Heart right ventricle (tissue), 16 donors: ENCODE measurements at regions of chr16 and their contacts with region 1.

Region 1: DNA sequence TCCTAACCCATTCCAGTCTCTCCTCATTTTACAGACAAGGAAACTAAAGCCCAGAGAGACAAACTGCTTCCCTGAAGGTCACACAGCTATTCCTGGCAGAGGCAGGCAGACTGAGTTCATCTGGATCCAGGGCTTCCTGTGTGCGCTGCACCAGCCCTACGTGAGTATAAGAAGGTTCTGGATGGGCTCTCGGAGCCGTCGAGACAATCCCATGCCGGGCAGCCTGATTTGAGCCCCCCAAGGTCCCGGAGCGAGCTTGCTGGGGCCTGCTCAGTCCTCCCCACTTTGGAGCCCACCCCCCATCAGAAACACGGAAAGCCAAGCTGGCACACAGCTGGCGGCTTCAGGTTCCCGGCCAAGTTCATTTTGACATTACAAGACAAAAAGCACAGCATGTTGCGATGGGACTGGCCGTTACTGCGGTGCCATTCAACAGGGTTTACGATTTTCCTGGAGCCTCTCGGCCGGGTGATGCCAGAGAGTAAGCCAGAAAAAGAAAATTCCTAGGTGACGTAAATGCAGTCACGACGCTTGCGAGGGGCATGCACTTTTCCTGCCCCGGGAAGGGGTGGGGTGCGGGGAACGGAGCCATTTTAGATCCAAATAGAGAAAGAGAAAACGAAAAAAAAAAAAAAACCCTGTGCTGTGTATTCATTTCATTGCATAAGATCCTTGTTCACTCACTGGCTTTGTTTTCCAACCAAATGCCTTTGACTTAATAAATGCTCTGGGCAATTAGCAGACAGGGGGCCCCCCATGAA is 167.1 kb upstream of the FOXF1 start:
- DNase-seq: peak; percentile 41 to 48
- ATAC-seq: peak in 7 of 8 donors; percentile 32 to 85 (median 72)
- H3K4me3 ChIP-seq: peak overlapping the region in 6 of 10 donors; percentile 5 to 28 (median 14)
- H3K27ac ChIP-seq: peak overlapping the region in 6 of 10 donors; percentile 18 to 65 (median 48)
- H3K4me1 ChIP-seq: peaks cover 0 to 18% (median 16%) of the 10 kb centered on the region in 9 donors
- H3K27me3 ChIP-seq: peaks cover 0 to 75% (median 64%) of the 10 kb centered on the region in 7 donors
- CTCF ChIP-seq: no peak

Region 2: GRCh38 chr16:86403541-86404163 is 60.4 kb after region 1 on chr16:
- intact Hi-C with region 1: no loop called
- DNase-seq: no peak
- ATAC-seq: no peak
- H3K4me3 ChIP-seq: no peak overlapping the region
- H3K27ac ChIP-seq: no peak overlapping the region
- H3K4me1 ChIP-seq: peaks cover 0 to 3% (median 0%) of the 10 kb centered on the region in 9 donors
- H3K27me3 ChIP-seq: peaks cover 0 to 80% (median 58%) of the 10 kb centered on the region in 7 donors
- CTCF ChIP-seq: no peak

Region 3: DNA sequence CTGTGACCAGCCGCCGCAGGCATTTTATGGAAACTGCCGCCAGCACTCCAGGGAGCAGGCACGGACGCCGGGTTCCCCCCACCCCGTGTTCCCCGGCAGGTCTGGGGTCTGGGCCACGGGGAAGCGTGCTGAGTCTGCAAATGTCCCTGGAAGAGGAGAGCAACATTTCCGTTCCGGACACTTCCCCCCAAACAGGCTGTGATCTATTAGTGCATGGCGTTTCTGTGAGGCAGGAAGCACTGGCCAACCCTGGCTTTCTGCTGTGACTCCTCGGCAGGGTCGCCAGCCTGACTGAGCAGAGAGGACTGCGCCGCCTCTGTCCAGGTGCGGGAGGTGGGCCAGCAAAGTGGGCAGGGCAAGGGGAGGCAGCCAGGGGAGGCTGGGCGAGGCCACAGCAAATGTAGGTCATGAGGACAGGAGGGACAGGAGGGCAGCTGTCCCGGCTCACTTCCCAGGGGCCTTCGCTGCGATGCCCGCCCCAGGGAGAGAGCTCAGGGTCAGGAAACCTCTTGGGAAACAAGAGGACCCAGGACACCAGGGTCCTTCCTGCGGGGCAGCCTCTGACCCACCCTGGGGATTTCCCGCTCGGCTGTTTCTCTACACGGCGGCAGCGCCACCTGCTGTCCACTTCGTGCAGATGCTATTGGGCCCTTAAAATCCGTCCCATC is 176.6 kb after region 1 on chr16:
- intact Hi-C with region 1: loop called (anchors 1 to 5 kb)
- DNase-seq: peak; percentile 40 to 66
- ATAC-seq: peak; percentile 32 to 73 (median 46)
- H3K4me3 ChIP-seq: no peak overlapping the region
- H3K27ac ChIP-seq: no peak overlapping the region
- H3K4me1 ChIP-seq: peaks cover 0 to 29% (median 15%) of the 10 kb centered on the region in 9 donors
- H3K27me3 ChIP-seq: peaks cover 13 to 96% (median 85%) of the 10 kb centered on the region in 7 donors
- CTCF ChIP-seq: peak; percentile 76 to 95 (median 92)